ENCODE measurements at regions of chr12 and their contacts with region 1.

Region 1: DNA sequence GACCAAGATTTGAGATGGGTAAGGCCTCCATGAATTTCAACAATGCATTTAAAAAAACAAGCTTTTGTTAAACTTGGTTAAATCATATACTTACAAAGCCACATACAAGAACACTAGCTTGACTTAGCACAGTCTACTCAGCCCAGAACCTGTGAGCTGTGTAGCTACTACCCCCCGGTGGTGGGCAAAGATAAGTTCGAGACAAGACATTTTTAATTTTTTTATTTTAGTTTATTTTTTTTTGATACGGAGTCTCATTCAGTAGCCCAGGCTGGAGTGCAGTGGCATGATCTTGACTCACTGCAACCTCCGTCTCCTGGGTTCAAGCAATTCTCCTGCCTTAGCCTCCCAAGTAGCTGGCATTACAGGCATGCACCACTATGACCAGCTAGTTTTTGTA is 3.7 kb upstream of the NECAP1 start:
- DNase-seq: peak; percentile 72
- ATAC-seq: peak; percentile 37
- H3K4me3 Mint-ChIP-seq: no peak overlapping the region
- H3K27ac Mint-ChIP-seq: peak overlapping the region; percentile 96
- H3K4me1 Mint-ChIP-seq: peaks cover 41% of the 10 kb centered on the region
- H3K27me3 Mint-ChIP-seq: no peaks in the 10 kb centered on the region
- CTCF ChIP-seq: peak; percentile 50

Region 2: GRCh38 chr12:7859552-7859951 is 218.8 kb before region 1 on chr12:
- CTCF ChIA-PET with region 1: interaction called, 10 read pairs
- POLR2A ChIA-PET with region 1: interaction called, 3 read pairs
- intact Hi-C with region 1: no loop called
- DNase-seq: no peak
- ATAC-seq: no peak
- H3K4me3 Mint-ChIP-seq: no peak overlapping the region
- H3K27ac Mint-ChIP-seq: no peak overlapping the region
- H3K4me1 Mint-ChIP-seq: peaks cover 17% of the 10 kb centered on the region
- H3K27me3 Mint-ChIP-seq: no peaks in the 10 kb centered on the region
- CTCF ChIP-seq: no peak

Region 3: GRCh38 chr12:8032242-8033152 is 45.9 kb before region 1 on chr12 and contains the start of gene FOXJ2:
- CTCF ChIA-PET with region 1: interaction called, 21 read pairs
- POLR2A ChIA-PET with region 1: interaction called, 6 read pairs
- intact Hi-C with region 1: no loop called
- DNase-seq: peak; percentile 73
- ATAC-seq: peak; percentile 90
- H3K4me3 Mint-ChIP-seq: peak within 1 kb of the TSS; percentile 87
- H3K27ac Mint-ChIP-seq: peak within 1 kb of the TSS; percentile 83
- H3K4me1 Mint-ChIP-seq: peaks cover 48% of the 10 kb centered on the region
- H3K27me3 Mint-ChIP-seq: no peaks in the 10 kb centered on the region
- CTCF ChIP-seq: no peak
- total RNA-seq, gene FOXJ2: 11.1 to 12.8 TPM

Region 4: DNA sequence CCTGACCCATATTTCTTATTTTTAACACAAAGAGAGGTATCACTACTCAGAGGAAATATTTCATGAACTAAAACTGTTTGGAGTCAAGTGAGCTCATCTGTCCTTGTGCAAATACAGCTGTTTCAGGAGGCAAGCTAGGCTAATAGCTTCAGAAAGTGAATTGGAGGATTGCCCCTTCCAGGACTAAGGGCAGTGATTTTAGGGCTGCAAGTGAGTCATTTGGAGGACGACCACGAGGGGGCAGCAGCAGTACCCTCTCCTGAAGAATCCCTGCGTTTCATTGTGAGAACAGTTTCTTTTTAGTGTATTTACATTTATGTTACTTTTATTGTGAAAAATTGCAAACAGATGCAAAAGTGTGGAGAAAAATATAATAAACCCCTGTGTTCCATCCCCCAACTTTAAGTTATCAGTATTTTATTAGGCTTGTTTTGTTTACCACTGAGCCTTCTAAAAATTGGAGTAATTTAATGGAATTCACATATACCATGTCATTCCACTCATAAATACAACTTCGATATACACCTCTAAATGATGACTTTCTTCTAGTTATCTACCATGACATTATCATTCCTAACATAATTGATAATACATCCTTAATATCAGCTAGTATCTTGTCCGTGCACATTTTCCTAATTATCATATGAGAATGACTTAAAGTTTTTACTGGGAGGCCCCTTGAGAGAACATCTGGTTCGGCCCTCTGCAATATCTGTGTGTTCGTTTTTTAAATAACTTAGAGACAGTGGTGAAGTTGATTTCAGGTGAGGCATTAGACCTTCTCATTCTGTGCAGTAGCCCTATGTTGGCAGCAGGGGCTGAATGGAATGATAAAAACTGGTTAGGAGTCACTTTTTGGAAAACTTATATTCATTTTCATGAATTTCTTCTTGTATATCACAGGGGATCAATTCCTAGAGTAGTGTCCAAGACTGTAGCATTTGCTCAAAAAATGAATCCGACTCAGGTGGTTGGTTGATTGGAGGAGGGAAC is 32.1 kb before region 1 on chr12:
- CTCF ChIA-PET with region 1: interaction called, 269 read pairs
- POLR2A ChIA-PET with region 1: interaction called, 3 read pairs
- intact Hi-C with region 1: loop called (anchors 1 kb)
- DNase-seq: peak; percentile 92
- ATAC-seq: peak; percentile 82
- H3K4me3 Mint-ChIP-seq: no peak overlapping the region
- H3K27ac Mint-ChIP-seq: no peak overlapping the region
- H3K4me1 Mint-ChIP-seq: peaks cover 15% of the 10 kb centered on the region
- H3K27me3 Mint-ChIP-seq: no peaks in the 10 kb centered on the region
- CTCF ChIP-seq: peak; percentile 90

Region 5: GRCh38 chr12:8065991-8066594 is 12.3 kb before region 1 on chr12 and contains the start of gene C3AR1:
- CTCF ChIA-PET with region 1: interaction called, 43 read pairs
- POLR2A ChIA-PET with region 1: interaction called, 14 read pairs
- intact Hi-C with region 1: no loop called
- DNase-seq: peak; percentile 46
- ATAC-seq: peak; percentile 99
- H3K4me3 Mint-ChIP-seq: peak within 1 kb of the TSS; percentile 50
- H3K27ac Mint-ChIP-seq: peak within 1 kb of the TSS; percentile 77
- H3K4me1 Mint-ChIP-seq: peaks cover 32% of the 10 kb centered on the region
- H3K27me3 Mint-ChIP-seq: no peaks in the 10 kb centered on the region
- CTCF ChIP-seq: no peak
- total RNA-seq, gene C3AR1: 1.1 to 1.4 TPM